Right lobe of liver (tissue), 6 donors: ENCODE measurements at regions of chr3 and their contacts with region 1.

Region 1: DNA sequence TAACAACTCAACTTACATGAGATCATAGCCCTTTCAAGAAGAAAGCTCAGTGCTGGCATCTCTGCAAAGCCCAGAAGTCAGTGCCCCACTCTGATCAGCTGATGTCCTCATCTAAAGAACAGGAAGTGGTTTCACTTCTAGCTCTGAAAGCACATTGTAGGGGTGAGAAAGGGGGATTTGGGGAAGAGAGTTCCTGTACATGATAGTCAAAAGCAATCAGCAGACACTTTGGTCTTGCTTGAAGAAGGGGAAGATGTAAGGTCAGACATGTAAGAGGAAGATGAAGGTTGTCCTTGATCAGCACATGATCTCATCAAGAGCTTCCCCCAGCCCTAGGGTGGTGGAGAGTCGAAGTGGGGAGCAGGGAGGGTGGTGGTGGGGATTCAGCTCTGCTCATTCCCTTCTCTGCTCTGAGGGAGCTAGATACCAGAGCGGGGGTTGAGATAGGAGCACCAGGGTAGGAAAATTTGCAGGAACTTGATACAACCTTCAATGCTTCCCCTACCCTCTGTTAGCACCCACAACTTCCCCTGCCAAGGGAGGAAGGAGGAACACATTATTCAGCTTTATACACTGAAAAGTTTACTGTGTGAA is 76.4 kb upstream of the ETV5 start:
- DNase-seq: no peak
- ATAC-seq: peak; percentile 57 to 69 (median 65)
- H3K4me3 ChIP-seq: no peak overlapping the region
- H3K27ac ChIP-seq: no peak overlapping the region
- H3K4me1 ChIP-seq: no peaks in the 10 kb centered on the region
- H3K27me3 ChIP-seq: no peaks in the 10 kb centered on the region
- CTCF ChIP-seq: no peak
- POLR2A ChIP-seq: no peak

Region 2: GRCh38 chr3:187336322-187336721 is 1151.0 kb after region 1 on chr3:
- intact Hi-C with region 1: loop called in 1 of 2 experiments (anchors 10 kb)
- DNase-seq: no peak
- ATAC-seq: no peak
- H3K4me3 ChIP-seq: no peak overlapping the region
- H3K27ac ChIP-seq: no peak overlapping the region
- H3K4me1 ChIP-seq: no peaks in the 10 kb centered on the region
- H3K27me3 ChIP-seq: no peaks in the 10 kb centered on the region
- CTCF ChIP-seq: no peak
- POLR2A ChIP-seq: no peak